HepG2 (cell line): ENCODE measurements at regions of chr13 and their contacts with region 1.

Region 1: GRCh38 chr13:20495082-20496023 is 30.3 kb downstream of the CRYL1 start:
- DNase-seq: peak; percentile 66
- ATAC-seq: peak; percentile 70
- H3K4me3 ChIP-seq: peak overlapping the region in 2 of 3 experiments; percentile 32 to 34; a peak in 3 of 6 replicates
- H3K27ac ChIP-seq: peak overlapping the region; percentile 73
- H3K4me1 ChIP-seq: peaks cover 45% of the 10 kb centered on the region
- H3K27me3 ChIP-seq: no peaks in the 10 kb centered on the region
- CTCF ChIP-seq: peak; percentile 84
- EP300 ChIP-seq: peak in 1 of 2 experiments; percentile 15; a peak in 1 of 4 replicates
- POLR2A ChIP-seq: 0 out of 4 replicates have a peak, but pooled peaks of 1 of the 2 experiments have one; percentile 19
- RAD21 ChIP-seq: peak; percentile 77

Region 2: GRCh38 chr13:20544201-20544923 is 49.0 kb after region 1 on chr13:
- CTCF ChIA-PET with region 1: no interaction called
- POLR2A ChIA-PET with region 1: no interaction called
- in situ Hi-C with region 1: no loop called
- intact Hi-C with region 1: no loop called
- DNase-seq: no peak
- ATAC-seq: no peak
- H3K4me3 ChIP-seq: no peak overlapping the region
- H3K27ac ChIP-seq: no peak overlapping the region
- H3K4me1 ChIP-seq: peaks cover 47% of the 10 kb centered on the region
- H3K27me3 ChIP-seq: no peaks in the 10 kb centered on the region
- CTCF ChIP-seq: no peak
- EP300 ChIP-seq: no peak
- POLR2A ChIP-seq: no peak
- RAD21 ChIP-seq: no peak

Region 3: DNA sequence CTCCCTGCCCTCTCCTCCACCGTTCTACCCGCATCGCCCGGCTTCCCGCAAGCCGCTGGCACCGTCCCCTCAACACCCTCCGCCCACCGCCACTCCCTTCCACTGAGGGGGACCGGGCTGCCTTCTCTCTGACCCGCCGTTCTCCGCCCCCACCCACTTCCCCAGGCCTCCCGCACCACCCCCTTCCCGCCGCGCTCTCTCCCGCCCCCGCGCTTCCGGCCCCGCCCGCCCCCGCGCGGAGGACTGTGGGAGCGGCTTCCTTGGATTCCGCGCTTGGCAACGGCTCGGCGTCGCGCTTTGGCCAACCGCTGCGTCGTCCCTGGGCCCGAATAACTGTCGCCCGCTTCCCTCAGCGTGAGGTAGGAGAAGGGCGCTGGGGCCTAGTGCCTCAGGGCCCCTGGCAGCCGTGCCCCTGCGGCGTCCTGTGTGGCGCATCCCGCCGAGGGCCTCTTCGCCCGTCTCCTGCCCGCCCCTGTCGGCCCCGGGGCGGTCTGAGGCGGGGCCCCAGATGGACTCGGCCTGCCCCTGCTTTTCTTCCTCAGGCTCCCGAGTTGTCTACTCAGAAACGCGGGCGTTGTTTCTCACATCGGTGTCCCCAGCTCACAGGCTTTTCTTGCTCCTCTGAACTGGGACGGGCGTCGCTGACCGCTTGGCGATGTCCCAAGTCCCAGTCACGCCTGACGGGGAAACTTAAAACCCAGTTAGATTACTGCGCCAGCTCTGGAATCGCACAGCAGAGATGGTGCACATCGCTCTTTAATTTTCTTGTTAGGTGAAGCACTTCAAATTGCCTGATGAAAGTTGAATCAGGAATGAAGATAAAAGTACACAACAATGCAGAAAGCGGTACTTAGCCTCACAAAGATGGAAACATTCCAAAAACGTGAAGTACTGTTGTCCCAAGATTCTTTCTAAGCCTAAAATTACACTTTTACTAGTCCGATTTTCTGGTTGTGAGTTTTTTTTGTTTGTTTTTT is 71.8 kb after region 1 on chr13 and contains the start of gene IFT88:
- CTCF ChIA-PET with region 1: no interaction called
- POLR2A ChIA-PET with region 1: no interaction called
- in situ Hi-C with region 1: no loop called
- intact Hi-C with region 1: loop called (anchors 2 kb)
- DNase-seq: peak; percentile 81
- ATAC-seq: peak; percentile 93
- H3K4me3 ChIP-seq: peak within 1 kb of the TSS; percentile 65 to 74 (median 72)
- H3K27ac ChIP-seq: peak within 1 kb of the TSS; percentile 93
- H3K4me1 ChIP-seq: peaks cover 24% of the 10 kb centered on the region
- H3K27me3 ChIP-seq: no peaks in the 10 kb centered on the region
- CTCF ChIP-seq: no peak; the same call in 1 of the 2 replicates
- EP300 ChIP-seq: 0 out of 4 replicates have a peak, but pooled peaks of 1 of the 2 experiments have one; percentile 20
- POLR2A ChIP-seq: peak; percentile 59 to 84; a peak in 3 of 4 replicates
- RAD21 ChIP-seq: peak; percentile 67
- total RNA-seq, gene IFT88: 19.8 and 19.9 TPM in 2 replicates

Region 4: GRCh38 chr13:20703780-20704445 is 208.6 kb after region 1 on chr13:
- CTCF ChIA-PET with region 1: interaction called, 3 read pairs
- POLR2A ChIA-PET with region 1: no interaction called
- in situ Hi-C with region 1: loop called (anchors 5 kb)
- intact Hi-C with region 1: no loop called
- DNase-seq: peak; percentile 58
- ATAC-seq: peak; percentile 91
- H3K4me3 ChIP-seq: peak overlapping the region; percentile 16 to 62 (median 48); a peak in 4 of 6 replicates
- H3K27ac ChIP-seq: no peak overlapping the region
- H3K4me1 ChIP-seq: peaks cover 37% of the 10 kb centered on the region
- H3K27me3 ChIP-seq: no peaks in the 10 kb centered on the region
- CTCF ChIP-seq: peak; percentile 56; the same call in 1 of the 2 replicates
- EP300 ChIP-seq: no peak
- POLR2A ChIP-seq: peak; percentile 32 to 61; a peak in 1 of 4 replicates
- RAD21 ChIP-seq: peak; percentile 70

Region 5: GRCh38 chr13:20773194-20774080 is 278.1 kb after region 1 on chr13 and contains the start of gene EEF1AKMT1:
- CTCF ChIA-PET with region 1: no interaction called
- POLR2A ChIA-PET with region 1: no interaction called
- in situ Hi-C with region 1: no loop called
- intact Hi-C with region 1: loop called (anchors 5 kb)
- DNase-seq: peak; percentile 81
- ATAC-seq: peak; percentile 94
- H3K4me3 ChIP-seq: peak within 1 kb of the TSS; percentile 70 to 86 (median 74)
- H3K27ac ChIP-seq: peak within 1 kb of the TSS; percentile 98
- H3K4me1 ChIP-seq: peaks cover 41% of the 10 kb centered on the region
- H3K27me3 ChIP-seq: no peaks in the 10 kb centered on the region
- CTCF ChIP-seq: peak; percentile 13; the same call in 1 of the 2 replicates
- EP300 ChIP-seq: no peak
- POLR2A ChIP-seq: peak; percentile 93 to 95
- RAD21 ChIP-seq: 0 out of 2 replicates have a peak, but pooled peaks have one; percentile 48
- total RNA-seq, gene EEF1AKMT1: 16.1 and 23.5 TPM in 2 replicates